Activated naive CD4-positive, alpha-beta T cell treated with anti-CD3 and anti-CD28 coated beads for 36 hours (primary cell): ENCODE measurements at regions of chr1 and their contacts with region 1.

Region 1: DNA sequence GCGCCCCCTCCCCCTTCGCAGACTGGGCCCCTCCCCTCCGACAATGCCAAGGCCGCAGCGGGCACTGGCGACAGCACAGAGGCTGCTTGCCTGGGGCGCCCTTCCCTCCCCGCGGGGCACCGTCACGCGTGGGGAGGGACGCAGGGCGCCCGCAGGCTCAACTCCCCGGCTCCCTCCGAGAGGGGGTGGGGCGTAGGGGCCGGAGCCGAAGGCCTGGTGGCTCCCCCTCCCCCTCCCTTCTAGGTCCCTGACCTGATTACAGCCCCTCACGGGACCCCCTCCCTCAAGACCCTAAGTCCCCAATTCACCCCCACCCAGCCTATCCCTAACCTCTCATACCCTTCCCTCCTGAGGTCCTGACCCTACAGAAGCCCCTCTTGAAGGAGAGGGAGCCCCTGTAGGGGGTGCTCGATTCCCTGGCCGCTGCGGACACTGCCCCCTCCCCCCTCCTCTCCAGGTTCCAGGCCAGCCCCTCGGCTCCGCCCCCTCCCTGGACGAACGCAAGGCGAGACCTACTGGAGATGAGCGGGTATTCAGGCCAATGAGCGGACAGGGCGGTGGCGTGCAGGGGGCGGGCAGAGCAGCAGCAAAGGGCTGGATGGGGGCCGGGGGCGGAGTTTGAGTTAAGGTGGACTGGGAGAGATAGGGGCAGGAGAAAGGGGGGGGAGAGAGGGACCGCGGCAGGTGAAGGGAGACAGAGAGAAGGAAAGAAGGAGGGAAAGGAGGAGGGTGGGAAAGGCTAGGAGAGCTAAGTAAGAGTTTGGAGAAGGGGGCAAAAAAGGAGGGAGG is 733 bp upstream of the ZBTB7B start:
- DNase-seq: peak; percentile 100
- H3K4me3 Mint-ChIP-seq: peak overlapping the region; percentile 91
- H3K27ac Mint-ChIP-seq: peak overlapping the region; percentile 94
- H3K4me1 Mint-ChIP-seq: peaks cover 50% of the 10 kb centered on the region
- H3K27me3 Mint-ChIP-seq: no peaks in the 10 kb centered on the region

Region 2: DNA sequence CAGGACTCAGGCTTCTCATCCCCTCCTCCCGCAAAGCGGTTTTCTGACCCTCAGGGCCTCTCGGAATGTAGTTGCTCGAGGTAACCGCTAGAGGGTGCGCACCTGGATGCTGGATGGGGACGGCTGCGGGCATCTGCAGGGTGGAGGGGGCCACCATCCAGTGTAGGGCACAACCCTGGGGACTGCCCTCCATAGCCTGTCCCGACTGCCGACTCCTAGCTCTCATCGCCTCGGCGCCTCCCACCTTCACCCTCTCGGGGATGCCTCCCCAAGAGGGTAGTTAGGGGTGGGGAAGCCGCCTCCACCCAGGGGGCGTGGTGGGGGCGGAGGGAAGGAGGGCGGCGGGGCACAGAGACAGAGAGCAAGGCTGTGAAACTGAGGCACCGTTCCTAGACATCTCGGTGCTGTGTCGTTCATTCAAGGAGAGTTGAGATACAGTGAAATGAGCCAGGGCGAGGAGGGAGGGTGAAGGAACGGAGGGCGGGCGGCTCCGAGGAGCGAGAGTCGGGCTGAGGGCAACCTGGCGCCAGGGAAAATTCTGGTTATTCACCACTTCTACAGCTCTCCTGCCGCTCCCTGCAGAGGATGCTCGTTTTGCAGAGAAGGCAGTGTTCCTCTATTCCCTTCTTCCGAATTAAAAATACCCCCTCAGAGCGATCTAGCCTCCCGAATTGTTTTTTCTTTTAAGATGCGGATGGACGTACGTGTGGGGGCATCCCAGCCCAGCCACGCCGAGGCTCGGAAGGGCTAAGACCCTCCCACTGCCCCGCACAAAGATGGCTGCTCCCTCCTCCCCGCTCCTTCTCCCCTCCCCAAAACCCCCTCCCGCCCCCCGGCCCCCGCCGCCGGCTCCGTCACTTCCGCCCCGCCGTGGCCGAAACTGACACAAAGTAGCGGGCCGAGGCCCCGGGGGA is 676.9 kb before region 1 on chr1 and contains the start of gene ATP8B2:
- CTCF ChIA-PET with region 1: no interaction called
- intact Hi-C with region 1: loop called (anchors 10 kb)
- DNase-seq: peak; percentile 90
- H3K4me3 Mint-ChIP-seq: peak within 1 kb of the TSS; percentile 98
- H3K27ac Mint-ChIP-seq: peak within 1 kb of the TSS; percentile 94
- H3K4me1 Mint-ChIP-seq: peaks cover 37% of the 10 kb centered on the region
- H3K27me3 Mint-ChIP-seq: no peaks in the 10 kb centered on the region
- total RNA-seq, gene ATP8B2: 28.2 to 28.7 TPM

Region 3: GRCh38 chr1:154607609-154608396 is 394.1 kb before region 1 on chr1 and contains the start of gene ADAR:
- CTCF ChIA-PET with region 1: no interaction called
- intact Hi-C with region 1: loop called (anchors 1 kb)
- DNase-seq: peak; percentile 97
- H3K4me3 Mint-ChIP-seq: peak within 1 kb of the TSS; percentile 91
- H3K27ac Mint-ChIP-seq: peak within 1 kb of the TSS; percentile 96
- H3K4me1 Mint-ChIP-seq: peaks cover 75% of the 10 kb centered on the region
- H3K27me3 Mint-ChIP-seq: no peaks in the 10 kb centered on the region
- total RNA-seq, gene ADAR: 301 to 313 TPM

Region 4: DNA sequence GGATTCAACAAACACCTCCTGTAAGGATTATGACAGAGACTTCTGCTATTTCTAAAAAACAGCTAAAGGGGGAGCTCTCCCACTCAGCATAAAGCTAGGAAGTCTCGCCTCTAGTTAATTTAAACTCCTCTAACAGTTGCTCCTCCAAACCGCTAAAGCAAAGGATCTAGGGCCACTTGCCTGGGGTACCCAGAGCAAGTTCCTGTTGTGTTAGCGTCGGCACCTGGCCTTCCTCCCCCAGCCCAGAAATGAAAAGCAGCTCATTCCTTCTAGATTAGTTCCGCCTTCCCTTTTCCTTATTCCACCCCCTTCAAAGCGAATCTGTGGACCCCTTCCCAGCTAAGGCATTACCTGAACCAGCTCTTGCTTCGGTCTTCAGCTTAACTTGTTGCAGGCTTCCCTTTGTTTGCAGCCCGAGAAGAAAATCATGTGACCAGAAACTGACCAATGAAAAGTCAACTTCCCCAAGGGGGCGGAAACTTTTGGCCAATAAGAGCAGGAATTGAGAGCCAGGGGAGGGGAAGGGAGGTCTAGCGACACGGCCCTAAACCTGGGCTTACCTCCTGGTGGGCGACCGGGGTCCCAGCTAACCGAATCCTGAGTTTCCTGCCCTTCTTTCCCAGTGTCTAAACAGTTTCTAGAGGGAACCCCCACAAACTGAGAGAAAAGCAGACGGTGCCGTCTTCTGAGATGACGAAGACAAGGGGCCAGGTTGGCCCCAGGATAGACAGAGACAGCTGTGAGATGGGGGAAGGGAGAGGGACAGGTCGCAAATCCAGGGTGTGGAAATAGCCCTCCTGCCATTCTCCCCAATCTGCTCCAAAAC is 45.9 kb before region 1 on chr1 and contains the start of gene PBXIP1:
- CTCF ChIA-PET with region 1: interaction called, 17 read pairs
- intact Hi-C with region 1: loop called (anchors 1 kb)
- DNase-seq: peak; percentile 88
- H3K4me3 Mint-ChIP-seq: peak within 1 kb of the TSS; percentile 91
- H3K27ac Mint-ChIP-seq: peak within 1 kb of the TSS; percentile 96
- H3K4me1 Mint-ChIP-seq: peaks cover 74% of the 10 kb centered on the region
- H3K27me3 Mint-ChIP-seq: no peaks in the 10 kb centered on the region
- total RNA-seq, gene PBXIP1: 55.3 to 55.5 TPM

Region 5: DNA sequence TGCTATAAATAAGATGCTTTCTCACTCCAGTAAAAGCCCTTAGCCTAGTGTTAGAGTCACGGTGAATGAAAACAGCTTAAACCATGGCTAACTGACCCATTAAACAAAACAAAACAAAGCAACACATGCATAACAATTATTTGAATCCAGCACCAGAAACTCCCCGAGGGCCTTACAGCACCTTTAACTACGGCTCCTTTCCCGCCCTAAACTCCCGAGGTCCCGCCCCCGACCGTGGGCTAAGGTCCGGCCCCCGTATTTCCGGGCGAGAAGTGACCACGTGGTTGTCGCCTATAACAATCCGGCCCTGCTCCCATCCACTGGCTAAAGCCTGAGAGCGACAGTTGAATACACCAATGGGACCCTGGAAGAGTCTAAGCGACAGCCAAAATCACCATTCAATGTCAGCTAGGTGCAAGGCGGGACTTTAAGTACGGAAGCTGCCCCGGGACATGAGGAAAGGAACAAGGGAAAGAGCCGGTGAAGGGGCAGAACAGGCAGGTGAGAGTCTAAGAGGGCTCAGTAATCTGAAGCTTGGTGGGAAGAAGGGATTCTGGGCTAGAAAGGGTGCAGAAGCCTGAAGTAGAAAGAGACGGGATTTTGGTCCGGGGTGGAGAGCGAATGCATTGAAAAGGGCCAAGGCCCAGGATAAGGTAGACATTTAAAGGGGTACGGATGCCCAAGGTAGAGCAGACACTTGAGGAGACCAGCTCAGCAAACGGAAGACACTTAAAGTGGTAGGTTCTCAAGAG is 18.8 kb before region 1 on chr1 and contains the start of gene FLAD1:
- CTCF ChIA-PET with region 1: interaction called, 24 read pairs
- intact Hi-C with region 1: loop called (anchors 1 kb)
- DNase-seq: peak; percentile 99
- H3K4me3 Mint-ChIP-seq: no peak within 1 kb of the TSS
- H3K27ac Mint-ChIP-seq: no peak within 1 kb of the TSS
- H3K4me1 Mint-ChIP-seq: peaks cover 30% of the 10 kb centered on the region
- H3K27me3 Mint-ChIP-seq: no peaks in the 10 kb centered on the region
- total RNA-seq, gene FLAD1: 27.2 to 30.0 TPM

Region 6: GRCh38 chr1:155050560-155051341 is 48.9 kb after region 1 on chr1 and contains the start of gene ADAM15:
- CTCF ChIA-PET with region 1: interaction called, 7 read pairs
- intact Hi-C with region 1: loop called (anchors 1 kb)
- DNase-seq: peak; percentile 85
- H3K4me3 Mint-ChIP-seq: peak within 1 kb of the TSS; percentile 84
- H3K27ac Mint-ChIP-seq: no peak within 1 kb of the TSS
- H3K4me1 Mint-ChIP-seq: peaks cover 24% of the 10 kb centered on the region
- H3K27me3 Mint-ChIP-seq: no peaks in the 10 kb centered on the region
- total RNA-seq, gene ADAM15: 53.8 to 55.8 TPM

Region 7: DNA sequence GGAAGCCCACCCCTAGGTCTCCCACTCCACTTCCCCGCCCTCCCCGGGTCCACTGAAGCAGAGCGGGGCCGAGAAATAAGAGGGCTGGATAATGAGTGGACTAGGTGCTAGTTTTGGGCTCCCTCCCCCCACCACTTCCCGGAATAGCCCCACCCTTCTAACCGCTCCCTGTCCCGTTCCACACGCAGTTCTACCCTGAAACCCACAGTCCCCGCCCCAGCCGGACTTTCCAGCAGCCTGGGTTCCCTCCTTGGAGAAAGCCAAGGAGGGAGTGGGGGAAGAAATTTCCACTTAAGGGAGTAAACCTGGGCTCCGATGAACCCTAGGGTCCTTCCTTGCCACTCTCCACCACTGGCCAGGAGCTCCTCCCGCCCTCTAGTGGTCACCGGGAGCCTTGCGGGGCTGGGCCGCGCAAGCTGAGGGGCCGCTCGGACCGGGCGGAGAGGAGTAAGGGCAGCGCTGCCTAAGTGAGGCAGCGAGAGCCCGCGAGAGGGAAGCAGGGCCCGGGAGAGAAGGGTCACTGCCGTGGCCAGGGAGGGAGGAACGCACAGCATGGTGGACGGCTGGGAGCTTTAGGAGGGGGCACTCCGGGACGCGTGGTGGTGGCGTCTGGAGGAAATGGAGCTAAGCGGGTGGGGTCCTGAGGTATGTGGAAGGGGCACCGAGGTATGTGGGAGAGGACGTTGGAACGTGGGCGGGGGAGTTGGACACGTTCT is 191.6 kb after region 1 on chr1:
- CTCF ChIA-PET with region 1: interaction called, 3 read pairs
- intact Hi-C with region 1: loop called (anchors 5 kb)
- DNase-seq: peak; percentile 86
- H3K4me3 Mint-ChIP-seq: peak overlapping the region; percentile 93
- H3K27ac Mint-ChIP-seq: peak overlapping the region; percentile 96
- H3K4me1 Mint-ChIP-seq: peaks cover 27% of the 10 kb centered on the region
- H3K27me3 Mint-ChIP-seq: no peaks in the 10 kb centered on the region

Region 8: GRCh38 chr1:155205035-155205434 is 203.2 kb after region 1 on chr1:
- CTCF ChIA-PET with region 1: no interaction called
- intact Hi-C with region 1: no loop called
- DNase-seq: no peak
- H3K4me3 Mint-ChIP-seq: no peak overlapping the region
- H3K27ac Mint-ChIP-seq: no peak overlapping the region
- H3K4me1 Mint-ChIP-seq: peaks cover 22% of the 10 kb centered on the region
- H3K27me3 Mint-ChIP-seq: no peaks in the 10 kb centered on the region